ENCODE measurements at regions of chr10 and their contacts with region 1.

Region 1: GRCh38 chr10:35336084-35336831 is at the start of gene CCNY:
- DNase-seq: peak; percentile 93
- ATAC-seq: peak; percentile 63
- H3K4me3 ChIP-seq: peak within 1 kb of the TSS; percentile 78
- H3K27ac ChIP-seq: peak within 1 kb of the TSS; percentile 13
- H3K4me1 ChIP-seq: peaks cover 64% of the 10 kb centered on the region
- H3K27me3 ChIP-seq: no peaks in the 10 kb centered on the region
- CTCF ChIP-seq: no peak
- total RNA-seq, gene CCNY: 145 and 146 TPM in 2 replicates

Region 2: GRCh38 chr10:35015843-35016408 is 320.3 kb before region 1 on chr10:
- CTCF ChIA-PET with region 1: no interaction called
- POLR2A ChIA-PET with region 1: no interaction called
- intact Hi-C with region 1: no loop called
- DNase-seq: peak; percentile 59
- ATAC-seq: peak; percentile 44
- H3K4me3 ChIP-seq: no peak overlapping the region
- H3K27ac ChIP-seq: peak overlapping the region; percentile 25
- H3K4me1 ChIP-seq: peaks cover 29% of the 10 kb centered on the region
- H3K27me3 ChIP-seq: no peaks in the 10 kb centered on the region
- CTCF ChIP-seq: no peak

Region 3: GRCh38 chr10:35195361-35196306 is 140.6 kb before region 1 on chr10:
- CTCF ChIA-PET with region 1: no interaction called
- POLR2A ChIA-PET with region 1: no interaction called
- intact Hi-C with region 1: no loop called
- DNase-seq: peak; percentile 99
- ATAC-seq: peak; percentile 96
- H3K4me3 ChIP-seq: peak overlapping the region; percentile 60
- H3K27ac ChIP-seq: peak overlapping the region; percentile 78
- H3K4me1 ChIP-seq: peaks cover 17% of the 10 kb centered on the region
- H3K27me3 ChIP-seq: no peaks in the 10 kb centered on the region
- CTCF ChIP-seq: peak; percentile 100

Region 4: GRCh38 chr10:35236739-35237138 is 99.5 kb before region 1 on chr10:
- CTCF ChIA-PET with region 1: no interaction called
- POLR2A ChIA-PET with region 1: no interaction called
- intact Hi-C with region 1: loop called (anchors 1 kb)
- DNase-seq: peak; percentile 92
- ATAC-seq: peak; percentile 97
- H3K4me3 ChIP-seq: no peak overlapping the region
- H3K27ac ChIP-seq: no peak overlapping the region
- H3K4me1 ChIP-seq: no peaks in the 10 kb centered on the region
- H3K27me3 ChIP-seq: no peaks in the 10 kb centered on the region
- CTCF ChIP-seq: peak; percentile 99

Region 5: GRCh38 chr10:35372329-35372728 is 36.1 kb after region 1 on chr10:
- CTCF ChIA-PET with region 1: no interaction called
- POLR2A ChIA-PET with region 1: no interaction called
- intact Hi-C with region 1: loop called (anchors 1 kb)
- DNase-seq: peak; percentile 100
- ATAC-seq: peak; percentile 99
- H3K4me3 ChIP-seq: peak overlapping the region; percentile 8; the same call in 1 of the 2 replicates
- H3K27ac ChIP-seq: peak overlapping the region; percentile 76
- H3K4me1 ChIP-seq: peaks cover 31% of the 10 kb centered on the region
- H3K27me3 ChIP-seq: no peaks in the 10 kb centered on the region
- CTCF ChIP-seq: no peak

Region 6: DNA sequence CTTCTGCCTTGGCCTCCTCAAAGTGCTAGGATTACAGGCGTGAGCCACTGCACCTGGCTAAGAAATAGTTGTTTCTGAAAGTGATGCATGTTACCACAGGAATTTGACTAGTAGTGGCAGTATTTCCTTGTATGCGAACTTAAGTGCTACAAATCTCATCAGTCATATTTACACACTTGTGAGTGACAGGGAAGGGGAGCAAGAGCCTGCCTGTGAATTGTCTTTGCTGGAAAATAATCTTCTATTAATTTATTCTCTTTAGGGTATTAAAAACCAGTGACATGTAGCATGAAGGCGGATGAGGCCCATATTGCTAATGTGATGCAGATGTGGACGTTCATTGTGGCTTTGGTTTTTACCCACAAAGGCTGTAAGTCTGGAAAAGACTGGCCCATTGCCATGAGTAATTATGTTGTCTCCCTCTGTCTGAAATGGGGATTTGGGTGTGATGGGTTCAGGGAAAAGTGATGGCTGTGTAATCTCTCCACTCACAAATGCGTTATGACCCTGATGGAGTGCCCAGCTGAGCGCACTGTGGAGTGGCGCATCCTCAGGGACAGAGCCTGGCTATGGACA is 97.7 kb after region 1 on chr10:
- CTCF ChIA-PET with region 1: no interaction called
- POLR2A ChIA-PET with region 1: interaction called, 13 read pairs
- intact Hi-C with region 1: no loop called
- DNase-seq: no peak
- ATAC-seq: no peak
- H3K4me3 ChIP-seq: no peak overlapping the region
- H3K27ac ChIP-seq: no peak overlapping the region
- H3K4me1 ChIP-seq: no peaks in the 10 kb centered on the region
- H3K27me3 ChIP-seq: no peaks in the 10 kb centered on the region
- CTCF ChIP-seq: no peak

Region 7: GRCh38 chr10:35546824-35547273 is 210.6 kb after region 1 on chr10:
- CTCF ChIA-PET with region 1: interaction called, 5 read pairs
- POLR2A ChIA-PET with region 1: no interaction called
- intact Hi-C with region 1: loop called (anchors 1 kb)
- DNase-seq: peak; percentile 100
- ATAC-seq: peak; percentile 93
- H3K4me3 ChIP-seq: peak overlapping the region; percentile 31
- H3K27ac ChIP-seq: peak overlapping the region; percentile 86
- H3K4me1 ChIP-seq: peaks cover 42% of the 10 kb centered on the region
- H3K27me3 ChIP-seq: no peaks in the 10 kb centered on the region
- CTCF ChIP-seq: peak; percentile 78

Region 8: GRCh38 chr10:35813219-35813618 is 477.0 kb after region 1 on chr10:
- CTCF ChIA-PET with region 1: no interaction called
- POLR2A ChIA-PET with region 1: no interaction called
- intact Hi-C with region 1: no loop called
- DNase-seq: no peak
- ATAC-seq: peak; percentile 54
- H3K4me3 ChIP-seq: no peak overlapping the region
- H3K27ac ChIP-seq: no peak overlapping the region
- H3K4me1 ChIP-seq: no peaks in the 10 kb centered on the region
- H3K27me3 ChIP-seq: no peaks in the 10 kb centered on the region
- CTCF ChIP-seq: no peak

Measured in PC-3 (cell line).